Heart right ventricle (tissue), 16 donors: ENCODE measurements at regions of chr16 and their contacts with region 1.

Region 1: GRCh38 chr16:49183911-49184310 is 97.7 kb downstream of the CBLN1 start:
- DNase-seq: no peak
- ATAC-seq: peak in 3 of 8 donors; percentile 33 to 51 (median 39)
- H3K4me3 ChIP-seq: no peak overlapping the region
- H3K27ac ChIP-seq: no peak overlapping the region
- H3K4me1 ChIP-seq: no peaks in the 10 kb centered on the region
- H3K27me3 ChIP-seq: peaks cover 0 to 15% (median 0%) of the 10 kb centered on the region in 7 donors
- CTCF ChIP-seq: peak in 8 of 9 donors; percentile 11 to 52 (median 44)

Region 2: GRCh38 chr16:48347191-48347865 is 836.6 kb before region 1 on chr16:
- intact Hi-C with region 1: no loop called
- DNase-seq: no peak
- ATAC-seq: peak in 2 of 8 donors; percentile 22 to 27
- H3K4me3 ChIP-seq: no peak overlapping the region
- H3K27ac ChIP-seq: no peak overlapping the region
- H3K4me1 ChIP-seq: peaks cover 0 to 4% (median 0%) of the 10 kb centered on the region in 9 donors
- H3K27me3 ChIP-seq: no peaks in the 10 kb centered on the region
- CTCF ChIP-seq: no peak

Region 3: DNA sequence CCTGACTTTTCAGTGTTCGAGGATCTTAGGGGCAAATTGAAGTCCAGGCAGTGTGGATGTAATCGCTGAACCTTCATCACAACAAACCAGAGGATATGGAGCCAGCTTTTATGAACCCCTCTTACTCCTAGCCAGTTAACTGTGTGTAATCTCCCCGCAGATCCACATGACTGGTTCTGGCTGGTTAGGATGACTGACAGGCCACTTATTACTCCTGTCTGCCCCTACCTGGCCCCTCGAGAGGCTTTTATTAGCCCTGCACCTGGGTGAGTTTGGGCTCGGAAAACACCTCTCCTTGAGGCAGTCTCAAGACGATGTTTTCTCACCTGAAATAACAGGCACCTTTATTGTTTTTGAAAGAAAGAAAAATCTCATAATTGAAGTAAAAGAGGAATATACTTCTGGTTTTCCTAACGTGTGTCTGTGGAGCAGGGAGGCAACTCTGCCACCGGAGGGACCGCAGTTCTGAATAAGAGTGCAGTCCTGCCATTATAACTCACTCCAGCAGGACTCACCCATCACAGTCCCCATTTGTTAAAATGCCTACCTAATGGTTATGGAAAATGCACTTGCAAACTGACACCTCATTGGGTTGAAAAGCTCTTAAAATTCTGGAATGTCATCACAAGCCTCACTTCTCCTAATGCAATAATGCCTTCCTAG is 282.1 kb before region 1 on chr16:
- intact Hi-C with region 1: loop called in 2 of 10 experiments (anchors 10 kb)
- DNase-seq: no peak
- ATAC-seq: no peak
- H3K4me3 ChIP-seq: no peak overlapping the region
- H3K27ac ChIP-seq: no peak overlapping the region
- H3K4me1 ChIP-seq: no peaks in the 10 kb centered on the region
- H3K27me3 ChIP-seq: peaks cover 0 to 43% (median 35%) of the 10 kb centered on the region in 7 donors
- CTCF ChIP-seq: peak in 3 of 9 donors; percentile 10 to 26 (median 20)

Region 4: GRCh38 chr16:48911700-48912099 is 272.2 kb before region 1 on chr16:
- intact Hi-C with region 1: loop called in 4 of 10 experiments (anchors 5 to 10 kb)
- DNase-seq: no peak
- ATAC-seq: no peak
- H3K4me3 ChIP-seq: no peak overlapping the region
- H3K27ac ChIP-seq: no peak overlapping the region
- H3K4me1 ChIP-seq: peaks cover 0 to 6% (median 0%) of the 10 kb centered on the region in 9 donors
- H3K27me3 ChIP-seq: peaks cover 0 to 19% (median 2%) of the 10 kb centered on the region in 7 donors
- CTCF ChIP-seq: peak in 7 of 9 donors; percentile 8 to 53 (median 36)

Region 5: GRCh38 chr16:49213594-49213993 is 29.7 kb after region 1 on chr16:
- intact Hi-C with region 1: no loop called
- DNase-seq: no peak
- ATAC-seq: no peak
- H3K4me3 ChIP-seq: no peak overlapping the region
- H3K27ac ChIP-seq: no peak overlapping the region
- H3K4me1 ChIP-seq: no peaks in the 10 kb centered on the region
- H3K27me3 ChIP-seq: peaks cover 0 to 28% (median 3%) of the 10 kb centered on the region in 7 donors
- CTCF ChIP-seq: no peak

Region 6: DNA sequence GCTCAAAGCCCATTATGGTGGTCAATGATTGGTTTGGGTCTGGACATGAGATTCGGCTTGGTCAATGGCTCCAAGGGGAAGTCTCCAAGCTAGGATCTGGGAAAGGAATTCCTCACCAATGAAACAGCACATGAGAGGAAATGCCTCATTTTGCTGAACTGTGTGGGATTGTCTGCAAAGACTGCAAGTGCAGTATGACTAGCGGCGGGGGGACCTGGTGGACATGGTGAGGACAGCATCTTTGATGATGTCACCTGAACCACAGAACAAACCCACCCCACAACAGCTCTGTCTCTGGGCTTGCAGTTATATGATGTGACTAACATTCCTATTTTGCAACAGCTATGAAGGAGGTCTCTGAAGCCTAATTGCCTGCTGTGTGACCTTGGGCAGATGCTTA is 1313.7 kb after region 1 on chr16:
- intact Hi-C with region 1: no loop called
- DNase-seq: no peak
- ATAC-seq: no peak
- H3K4me3 ChIP-seq: no peak overlapping the region
- H3K27ac ChIP-seq: no peak overlapping the region
- H3K4me1 ChIP-seq: no peaks in the 10 kb centered on the region
- H3K27me3 ChIP-seq: peaks cover 0 to 8% (median 0%) of the 10 kb centered on the region in 7 donors
- CTCF ChIP-seq: no peak